ENCODE measurements at regions of chr11 and their contacts with region 1.

Region 1: GRCh38 chr11:64894070-64894796 is 15.8 kb upstream of the EHD1 start:
- DNase-seq: peak; percentile 96
- ATAC-seq: peak; percentile 99
- H3K4me3 Mint-ChIP-seq: no peak overlapping the region
- H3K27ac Mint-ChIP-seq: no peak overlapping the region
- H3K4me1 Mint-ChIP-seq: no peaks in the 10 kb centered on the region
- H3K27me3 Mint-ChIP-seq: no peaks in the 10 kb centered on the region

Region 2: DNA sequence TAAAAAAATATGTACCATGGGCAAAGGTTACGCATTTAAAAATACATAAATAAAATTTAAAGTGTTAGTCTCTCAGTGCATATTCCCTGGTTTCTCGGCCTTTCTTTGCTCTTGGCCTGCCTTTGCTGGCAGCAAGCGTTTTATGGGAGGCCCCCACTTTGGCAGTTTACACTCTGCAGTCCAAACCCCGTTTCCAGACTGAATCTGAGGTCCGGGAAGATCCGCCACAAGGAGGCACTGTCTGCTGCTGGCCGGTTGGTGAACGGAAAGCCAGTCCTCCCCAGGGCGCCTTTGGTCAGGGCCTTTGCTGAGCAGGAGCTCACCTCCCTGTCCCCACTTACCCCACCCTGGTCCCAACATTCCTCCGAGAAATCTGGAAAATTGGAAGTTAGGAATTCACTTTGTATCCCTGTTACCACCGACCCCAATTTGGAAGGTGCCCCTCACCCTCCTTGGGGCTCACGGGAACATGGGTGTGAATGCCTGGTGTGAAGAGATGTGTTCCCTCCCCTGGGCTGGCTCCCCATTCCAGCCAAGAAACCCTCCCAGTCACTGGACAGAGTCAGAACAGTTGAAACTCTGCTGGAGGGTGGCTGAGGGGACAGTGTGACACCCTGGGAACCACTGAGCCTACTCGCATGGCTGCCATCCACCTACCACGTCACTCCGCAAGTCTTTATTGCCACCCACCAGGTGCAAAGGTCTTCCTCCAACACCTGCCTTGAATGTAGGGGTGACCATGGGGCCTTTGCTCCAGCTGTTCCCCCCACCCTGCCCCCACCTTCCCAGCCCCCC is 106.5 kb before region 1 on chr11:
- CTCF ChIA-PET with region 1: no interaction called
- POLR2A ChIA-PET with region 1: no interaction called
- intact Hi-C with region 1: loop called in 1 of 2 experiments (anchors 1 kb)
- DNase-seq: peak; percentile 79
- ATAC-seq: peak; percentile 78
- H3K4me3 Mint-ChIP-seq: no peak overlapping the region
- H3K27ac Mint-ChIP-seq: no peak overlapping the region
- H3K4me1 Mint-ChIP-seq: peaks cover 9% of the 10 kb centered on the region
- H3K27me3 Mint-ChIP-seq: no peaks in the 10 kb centered on the region

Region 3: DNA sequence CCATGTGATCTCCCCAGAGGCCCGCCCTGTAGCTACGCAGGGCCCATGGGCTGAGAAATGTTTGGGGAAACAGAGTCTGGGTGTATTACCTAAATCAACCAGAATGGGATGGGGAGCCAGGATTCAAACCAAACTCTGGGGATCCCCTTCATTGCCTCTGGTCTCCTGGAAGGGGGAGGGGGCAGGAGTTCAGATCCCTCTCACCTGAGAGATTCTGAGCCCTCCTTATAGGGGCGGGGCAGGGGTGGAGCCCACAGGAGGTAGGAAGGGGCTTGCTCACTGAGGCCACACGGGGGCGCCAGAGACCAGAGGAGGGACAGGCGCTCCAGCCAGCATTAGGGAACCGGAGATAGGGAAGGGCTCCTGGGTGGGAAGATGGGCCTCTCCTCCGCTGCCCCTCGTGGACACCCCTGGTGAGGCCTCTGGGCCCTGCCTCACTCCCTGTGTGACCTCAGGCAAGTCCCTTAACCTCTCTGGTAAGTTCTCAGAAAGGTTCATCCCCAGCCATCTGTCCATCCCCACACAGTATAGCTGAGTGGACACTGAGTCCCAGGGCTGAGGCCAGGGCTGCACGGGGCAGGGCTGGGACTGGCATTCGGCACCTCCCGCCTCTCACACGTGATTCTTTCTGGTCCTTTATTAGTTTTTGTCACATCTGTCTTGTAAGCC is 47.1 kb before region 1 on chr11:
- CTCF ChIA-PET with region 1: interaction called, 377 read pairs
- POLR2A ChIA-PET with region 1: no interaction called
- intact Hi-C with region 1: loop called (anchors 1 kb)
- DNase-seq: peak; percentile 96
- ATAC-seq: peak; percentile 75
- H3K4me3 Mint-ChIP-seq: no peak overlapping the region
- H3K27ac Mint-ChIP-seq: no peak overlapping the region
- H3K4me1 Mint-ChIP-seq: peaks cover 54% of the 10 kb centered on the region
- H3K27me3 Mint-ChIP-seq: no peaks in the 10 kb centered on the region

Region 4: DNA sequence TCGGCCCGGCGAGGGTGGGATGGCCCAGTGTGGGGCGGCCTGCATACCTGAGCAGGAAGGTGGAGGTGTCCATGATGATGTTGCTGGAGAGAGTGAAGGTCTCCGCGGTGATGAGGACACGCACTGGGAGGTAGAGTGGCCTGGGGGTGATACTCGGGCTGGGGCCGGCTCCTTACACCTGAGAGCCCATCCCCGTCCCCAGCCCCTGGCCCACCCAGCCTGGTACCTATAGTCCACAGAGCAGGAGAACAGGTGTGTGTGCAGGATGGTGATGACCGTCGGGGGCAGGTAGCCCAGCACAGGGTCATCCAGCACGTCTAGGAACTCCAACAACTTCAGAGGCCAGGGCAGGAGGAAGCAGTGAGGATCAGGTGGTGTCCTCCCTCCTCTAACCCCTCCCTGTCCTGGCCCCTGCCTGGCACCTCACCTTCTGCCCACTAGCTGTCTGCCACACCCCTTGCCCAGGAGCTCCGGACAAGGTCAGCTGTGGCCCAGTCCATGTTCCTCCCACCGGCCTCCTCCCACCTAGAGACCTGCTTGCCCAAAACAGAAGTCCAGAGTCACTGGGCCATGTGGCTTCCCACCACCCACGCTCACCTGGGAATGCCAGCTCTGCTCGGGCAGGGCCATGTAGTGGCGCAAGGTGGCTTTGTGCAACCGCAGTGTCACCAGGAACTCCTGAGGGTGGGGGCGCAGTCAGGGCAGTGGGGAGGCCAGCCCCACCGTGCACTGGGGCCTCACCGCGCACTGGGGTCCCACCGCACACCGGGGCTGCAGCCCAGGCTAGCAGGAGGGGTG is 11.5 kb after region 1 on chr11:
- CTCF ChIA-PET with region 1: no interaction called
- POLR2A ChIA-PET with region 1: no interaction called
- intact Hi-C with region 1: no loop called
- DNase-seq: no peak
- ATAC-seq: no peak
- H3K4me3 Mint-ChIP-seq: no peak overlapping the region
- H3K27ac Mint-ChIP-seq: no peak overlapping the region
- H3K4me1 Mint-ChIP-seq: peaks cover 9% of the 10 kb centered on the region
- H3K27me3 Mint-ChIP-seq: no peaks in the 10 kb centered on the region